ENCODE measurements at regions of chr11 and their contacts with region 1.

Region 1: GRCh38 chr11:118051611-118052461 is 25.0 kb upstream of the TMPRSS4 start:
- DNase-seq: no peak
- H3K4me3 ChIP-seq: no peak overlapping the region
- H3K27ac ChIP-seq: no peak overlapping the region
- H3K4me1 ChIP-seq: no peaks in the 10 kb centered on the region
- H3K27me3 ChIP-seq: peaks cover 26% of the 10 kb centered on the region
- CTCF ChIP-seq: no peak

Region 2: DNA sequence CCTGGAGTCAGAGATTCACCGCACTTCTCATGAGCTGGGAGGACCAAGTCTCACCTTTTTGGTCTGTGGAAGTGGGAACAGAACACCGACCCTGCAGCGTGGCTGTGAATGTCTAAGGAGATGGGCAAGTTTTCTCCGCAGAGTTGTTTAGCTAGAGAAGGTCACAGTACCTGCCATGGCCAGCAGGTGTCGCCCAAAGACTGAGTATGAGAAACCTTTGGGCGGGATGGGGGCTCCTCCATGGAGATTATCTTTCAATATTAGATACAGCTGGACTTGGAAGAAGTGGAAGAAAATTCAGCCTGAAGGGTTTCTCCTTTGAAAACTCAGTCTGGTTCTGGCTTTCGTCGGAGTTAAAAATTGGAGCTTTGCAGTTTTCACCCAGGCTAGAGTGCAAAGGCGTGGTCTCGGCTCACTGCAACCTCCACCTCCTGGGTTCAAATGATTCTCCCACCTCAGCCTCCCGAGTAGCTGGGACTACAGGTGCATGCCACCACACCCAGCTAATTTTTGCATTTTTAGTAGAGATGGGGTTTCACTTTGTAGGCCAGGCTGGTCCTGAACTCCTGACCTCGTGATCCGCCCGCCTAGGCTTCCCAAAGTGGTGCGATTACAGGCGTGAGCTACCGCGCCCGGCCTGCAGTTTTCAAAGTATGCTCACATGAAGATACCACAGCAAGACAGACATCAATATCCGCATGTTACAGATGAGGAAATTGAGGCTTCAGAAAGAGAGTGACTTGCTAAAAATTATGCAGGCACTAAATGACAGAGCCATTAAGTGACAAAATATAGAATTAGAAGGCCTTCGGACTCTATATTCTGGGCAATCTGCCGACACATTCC is 244.1 kb before region 1 on chr11:
- CTCF ChIA-PET with region 1: interaction called, 10 read pairs
- POLR2A ChIA-PET with region 1: no interaction called
- intact Hi-C with region 1: no loop called
- DNase-seq: peak; percentile 83
- H3K4me3 ChIP-seq: no peak overlapping the region
- H3K27ac ChIP-seq: no peak overlapping the region
- H3K4me1 ChIP-seq: peaks cover 11% of the 10 kb centered on the region
- H3K27me3 ChIP-seq: peaks cover 3% of the 10 kb centered on the region
- CTCF ChIP-seq: peak; percentile 93

Region 3: DNA sequence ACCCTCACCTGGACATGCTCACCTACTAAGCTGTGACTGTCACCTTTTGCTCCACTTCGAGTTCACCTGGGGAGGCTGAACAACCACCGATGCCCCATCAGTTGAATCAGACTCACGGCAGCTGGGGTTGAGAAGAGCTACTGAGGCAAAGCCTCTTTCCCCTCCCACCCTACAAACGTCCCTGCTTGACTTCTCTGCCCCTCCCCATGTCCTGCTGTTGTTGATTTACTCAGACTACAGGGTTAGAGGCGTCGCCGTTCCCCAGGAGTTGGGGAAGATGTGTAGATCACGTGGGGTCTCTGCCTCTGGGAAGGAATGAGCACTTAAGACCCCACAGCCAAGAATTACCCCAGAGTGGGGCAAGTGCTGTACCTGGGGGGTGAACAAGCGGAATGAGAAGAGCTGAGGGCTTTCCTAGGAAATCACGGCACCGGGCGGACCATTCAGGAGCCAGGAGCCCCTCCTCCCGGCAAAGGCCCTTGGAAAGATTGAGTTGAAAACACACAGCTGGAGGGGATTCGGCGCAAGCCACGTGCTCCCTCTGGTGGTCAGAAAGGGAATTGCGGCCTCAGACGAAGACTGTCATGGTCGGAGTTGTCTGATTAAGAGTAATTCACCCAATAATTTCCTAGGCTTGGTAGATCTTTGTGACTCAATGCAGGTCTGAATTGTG is 234.3 kb before region 1 on chr11:
- CTCF ChIA-PET with region 1: interaction called, 9 read pairs
- POLR2A ChIA-PET with region 1: no interaction called
- intact Hi-C with region 1: loop called (anchors 1 kb)
- DNase-seq: peak; percentile 89
- H3K4me3 ChIP-seq: no peak overlapping the region
- H3K27ac ChIP-seq: no peak overlapping the region
- H3K4me1 ChIP-seq: peaks cover 35% of the 10 kb centered on the region
- H3K27me3 ChIP-seq: no peaks in the 10 kb centered on the region
- CTCF ChIP-seq: peak; percentile 99

Region 4: GRCh38 chr11:117843666-117844484 is 208.0 kb before region 1 on chr11:
- CTCF ChIA-PET with region 1: interaction called, 4 read pairs
- POLR2A ChIA-PET with region 1: no interaction called
- intact Hi-C with region 1: loop called (anchors 1 kb)
- DNase-seq: peak; percentile 71
- H3K4me3 ChIP-seq: no peak overlapping the region
- H3K27ac ChIP-seq: no peak overlapping the region
- H3K4me1 ChIP-seq: no peaks in the 10 kb centered on the region
- H3K27me3 ChIP-seq: no peaks in the 10 kb centered on the region
- CTCF ChIP-seq: peak; percentile 99

Region 5: DNA sequence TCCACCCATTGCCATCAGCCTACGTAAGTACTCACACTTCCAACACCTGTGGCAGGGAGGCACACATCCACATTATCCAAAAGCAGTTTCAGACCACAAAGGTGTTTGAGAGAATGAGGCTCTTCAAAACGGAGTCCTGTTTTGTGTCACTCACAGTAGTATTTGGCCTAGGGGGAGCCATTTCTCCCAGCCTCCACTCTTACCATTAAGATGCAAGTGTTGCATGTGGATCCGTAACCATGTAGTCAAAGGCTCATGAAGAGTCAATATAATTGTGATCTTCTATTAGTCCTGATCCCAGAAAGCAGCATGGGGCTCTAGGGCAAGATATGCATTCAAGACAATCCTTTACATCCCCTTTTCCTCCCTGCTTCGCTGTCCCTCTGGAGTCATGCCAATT is 24.1 kb before region 1 on chr11:
- CTCF ChIA-PET with region 1: no interaction called
- POLR2A ChIA-PET with region 1: no interaction called
- intact Hi-C with region 1: no loop called
- DNase-seq: no peak
- H3K4me3 ChIP-seq: no peak overlapping the region
- H3K27ac ChIP-seq: no peak overlapping the region
- H3K4me1 ChIP-seq: no peaks in the 10 kb centered on the region
- H3K27me3 ChIP-seq: no peaks in the 10 kb centered on the region
- CTCF ChIP-seq: 0 out of 2 replicates have a peak, but pooled peaks have one; percentile 22

Measured in A673 (cell line).